Activated CD8-positive, alpha-beta T cell treated with anti-CD3 and anti-CD28 coated beads, Interleukin-2, amount 10 ng/mL, durations not matched to agents 7 days and 5 days (primary cell): ENCODE measurements at regions of chr16 and their contacts with region 1.

Region 1: GRCh38 chr16:68064791-68065365 is 20.3 kb upstream of the NFATC3 start:
- DNase-seq: peak; percentile 87
- ATAC-seq: peak; percentile 74
- H3K4me3 Mint-ChIP-seq: no peak overlapping the region
- H3K27ac Mint-ChIP-seq: peak overlapping the region; percentile 88
- H3K4me1 Mint-ChIP-seq: peaks cover 85% of the 10 kb centered on the region
- H3K27me3 Mint-ChIP-seq: no peaks in the 10 kb centered on the region

Region 2: GRCh38 chr16:67942200-67942509 is 122.7 kb before region 1 on chr16:
- CTCF ChIA-PET with region 1: interaction called, 18 read pairs
- POLR2A ChIA-PET with region 1: interaction called, 4 read pairs
- DNase-seq: peak; percentile 54
- ATAC-seq: peak; percentile 44
- H3K4me3 Mint-ChIP-seq: no peak overlapping the region
- H3K27ac Mint-ChIP-seq: peak overlapping the region; percentile 17
- H3K4me1 Mint-ChIP-seq: peaks cover 36% of the 10 kb centered on the region
- H3K27me3 Mint-ChIP-seq: no peaks in the 10 kb centered on the region

Region 3: DNA sequence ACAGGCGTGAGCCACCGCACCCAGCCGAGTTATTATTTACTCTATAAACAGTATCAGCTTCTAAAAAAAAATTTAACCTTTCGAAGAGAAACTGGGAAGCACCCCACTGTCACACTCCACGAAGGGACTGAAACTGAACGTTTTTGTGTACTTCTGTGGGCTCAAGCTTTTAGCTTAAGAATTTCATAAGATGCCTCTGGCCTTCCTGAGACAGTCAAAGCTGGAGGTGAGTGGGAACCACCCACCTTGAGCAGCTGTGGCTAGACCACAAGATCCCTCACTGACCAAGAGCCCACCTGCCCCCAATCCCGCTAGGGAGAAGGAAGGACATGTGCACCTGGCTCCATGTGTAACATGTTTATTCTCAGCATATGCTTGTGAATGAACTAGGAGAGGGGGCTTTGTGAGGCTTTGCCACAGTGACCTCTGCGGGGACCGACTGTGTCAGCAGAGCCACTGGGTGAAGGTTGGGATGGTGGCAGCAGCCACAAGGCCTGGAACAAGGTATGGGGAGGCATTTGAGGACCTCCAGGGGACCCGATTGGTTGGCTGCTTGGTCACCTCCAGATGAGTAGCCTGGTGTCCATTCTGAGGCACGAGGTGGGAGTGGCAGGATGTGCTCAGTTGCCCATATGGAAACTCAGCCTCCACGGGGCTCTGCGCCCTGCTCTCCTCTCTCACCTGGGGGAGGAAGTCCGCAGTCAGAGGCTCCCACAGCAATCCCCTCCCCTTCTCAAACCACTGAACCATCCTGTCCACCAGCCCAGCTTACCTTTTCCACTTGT is 89.4 kb before region 1 on chr16:
- CTCF ChIA-PET with region 1: no interaction called
- POLR2A ChIA-PET with region 1: no interaction called
- DNase-seq: no peak
- ATAC-seq: no peak
- H3K4me3 Mint-ChIP-seq: no peak overlapping the region
- H3K27ac Mint-ChIP-seq: no peak overlapping the region
- H3K4me1 Mint-ChIP-seq: peaks cover 2% of the 10 kb centered on the region
- H3K27me3 Mint-ChIP-seq: peaks cover 6% of the 10 kb centered on the region

Region 4: DNA sequence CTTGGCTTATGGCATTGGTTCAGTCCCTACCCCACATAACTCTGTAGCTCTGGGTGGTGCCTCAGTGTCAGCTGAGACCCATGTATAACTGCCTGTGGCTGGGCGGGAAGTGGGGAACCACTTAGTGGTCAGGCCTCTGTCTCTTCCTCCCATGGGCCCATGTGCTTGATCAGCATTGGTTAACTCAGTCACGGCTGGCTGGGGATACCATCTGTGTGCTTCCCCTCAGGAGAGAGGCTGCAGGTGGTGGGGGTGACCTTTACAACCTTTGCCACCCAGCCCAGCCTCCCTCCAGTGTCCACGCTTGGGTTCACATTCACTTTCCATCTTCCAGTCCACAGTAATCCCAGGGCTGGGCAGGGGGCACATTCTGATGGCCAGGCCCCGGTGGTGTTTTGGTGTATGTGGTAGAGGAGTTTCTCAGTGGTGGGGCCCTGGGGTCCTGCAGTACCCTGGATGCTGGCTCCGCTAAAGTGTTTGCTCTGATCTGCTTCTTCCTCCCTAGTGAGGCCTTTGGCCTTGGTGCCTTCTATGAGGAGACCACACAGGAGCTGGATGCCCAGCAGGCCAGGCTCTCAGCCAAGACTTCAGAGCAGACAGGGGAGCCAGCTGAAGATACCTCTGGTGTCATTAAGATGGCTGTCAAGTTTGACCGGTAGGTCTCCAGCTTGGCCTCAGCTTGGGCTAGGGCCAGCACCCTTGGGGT is 10.1 kb after region 1 on chr16:
- CTCF ChIA-PET with region 1: interaction called, 68 read pairs
- POLR2A ChIA-PET with region 1: interaction called, 29 read pairs
- DNase-seq: peak; percentile 95
- ATAC-seq: peak; percentile 81
- H3K4me3 Mint-ChIP-seq: peak overlapping the region; percentile 57
- H3K27ac Mint-ChIP-seq: peak overlapping the region; percentile 89
- H3K4me1 Mint-ChIP-seq: peaks cover 89% of the 10 kb centered on the region
- H3K27me3 Mint-ChIP-seq: no peaks in the 10 kb centered on the region

Region 5: DNA sequence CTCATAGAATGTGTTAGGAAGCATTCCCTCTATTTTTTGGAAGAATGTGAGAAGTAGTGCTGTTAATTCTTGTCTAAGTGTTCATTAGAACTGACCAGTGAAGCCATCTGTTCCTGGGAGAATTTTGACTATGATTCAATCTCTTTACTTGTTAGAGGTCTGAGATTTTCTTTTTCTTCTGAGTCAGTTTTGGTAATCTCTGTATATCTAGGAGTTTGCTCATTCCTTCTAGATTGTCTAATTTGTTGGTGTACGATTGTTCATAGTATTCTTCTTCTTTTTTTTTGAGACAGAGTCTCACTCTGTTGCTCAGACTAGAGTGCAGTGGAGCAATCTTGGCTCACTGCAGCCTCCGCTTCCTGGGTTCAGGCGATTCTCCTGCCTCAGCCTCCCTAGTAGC is 40.7 kb after region 1 on chr16:
- CTCF ChIA-PET with region 1: no interaction called
- POLR2A ChIA-PET with region 1: no interaction called
- DNase-seq: no peak
- ATAC-seq: no peak
- H3K4me3 Mint-ChIP-seq: no peak overlapping the region
- H3K27ac Mint-ChIP-seq: no peak overlapping the region
- H3K4me1 Mint-ChIP-seq: peaks cover 62% of the 10 kb centered on the region
- H3K27me3 Mint-ChIP-seq: no peaks in the 10 kb centered on the region

Region 6: DNA sequence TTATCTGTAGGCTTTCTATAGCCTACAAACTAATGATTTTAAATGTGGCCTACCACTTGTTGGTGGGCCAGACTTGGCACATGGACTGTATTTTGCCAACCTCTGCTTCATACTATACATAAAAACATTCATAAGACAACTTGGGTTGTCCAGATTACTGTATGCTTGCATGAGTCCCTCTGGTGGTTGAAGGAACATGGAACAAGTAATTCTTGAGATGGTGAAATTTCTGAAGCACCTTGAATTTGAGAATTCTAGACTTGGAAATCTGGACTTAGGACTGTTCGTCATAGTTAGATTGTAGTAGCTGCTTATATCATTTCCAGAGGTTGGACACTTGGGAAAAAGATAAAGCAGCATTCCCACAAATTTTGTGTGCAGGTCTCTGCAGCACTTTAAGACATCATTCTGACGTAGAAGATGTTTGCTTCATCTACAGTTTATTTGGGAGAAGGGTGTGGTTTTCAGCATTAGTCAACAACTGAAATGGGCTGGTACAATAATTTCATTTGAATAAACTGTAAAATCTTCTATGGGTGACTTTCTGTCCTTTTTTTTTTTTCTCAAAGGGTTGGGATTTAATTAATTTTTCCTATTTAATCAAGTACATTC is 51.5 kb after region 1 on chr16:
- CTCF ChIA-PET with region 1: no interaction called
- POLR2A ChIA-PET with region 1: no interaction called
- DNase-seq: no peak
- ATAC-seq: peak; percentile 53
- H3K4me3 Mint-ChIP-seq: no peak overlapping the region
- H3K27ac Mint-ChIP-seq: no peak overlapping the region
- H3K4me1 Mint-ChIP-seq: peaks cover 81% of the 10 kb centered on the region
- H3K27me3 Mint-ChIP-seq: no peaks in the 10 kb centered on the region